Lower lobe of right lung (tissue), 2 donors: ENCODE measurements at regions of chr18 and their contacts with region 1.

Region 1: DNA sequence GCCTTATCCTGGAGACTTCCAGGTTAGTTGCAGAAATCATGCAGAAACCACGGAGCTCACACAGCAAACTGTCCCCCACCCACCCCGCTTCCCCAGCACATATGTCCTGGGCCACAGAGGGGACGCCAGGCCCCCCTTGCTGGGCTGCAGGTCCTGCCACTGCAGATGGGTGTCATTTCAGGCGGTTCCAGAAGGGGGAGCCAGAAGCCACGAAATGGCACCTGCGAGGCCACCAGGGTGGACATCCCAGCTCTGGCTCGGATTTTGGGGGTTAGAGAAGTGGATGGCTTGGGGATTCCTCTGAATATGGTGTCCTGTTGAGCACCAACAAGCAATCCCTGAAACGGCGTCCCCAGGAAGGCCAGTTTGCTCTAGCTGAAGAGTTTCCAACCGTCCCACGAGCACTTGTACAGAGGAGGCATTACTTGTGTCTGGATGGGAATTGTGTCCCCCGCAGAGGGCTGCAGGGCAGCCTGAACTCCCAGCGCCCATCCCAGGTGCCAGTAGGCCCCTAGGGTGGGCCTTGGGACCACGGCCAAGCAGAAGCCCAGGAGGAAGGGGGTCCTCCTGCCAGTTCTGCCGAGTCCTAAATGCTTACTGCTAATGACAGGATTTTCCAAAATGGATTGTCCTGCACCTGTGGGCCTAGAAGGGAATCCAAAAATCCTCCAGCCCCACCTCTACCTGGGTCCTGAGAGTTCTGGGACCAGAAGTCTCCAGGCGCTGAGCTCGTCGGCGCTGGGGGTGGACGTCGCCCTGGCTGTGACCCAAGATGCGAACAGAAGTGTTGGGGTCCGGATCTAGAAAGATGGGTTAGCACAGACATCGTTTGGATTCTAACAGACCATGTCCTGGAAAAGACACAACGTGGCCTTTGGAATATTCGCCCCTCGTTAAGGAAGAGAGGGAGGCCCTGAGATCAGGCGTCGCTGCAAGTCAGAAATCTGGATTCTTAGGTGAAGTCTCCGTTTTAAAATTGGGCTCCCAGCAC is 14.6 kb upstream of the NFATC1 start:
- DNase-seq: peak; percentile 65
- ATAC-seq: peak; percentile 50 to 56
- H3K4me3 ChIP-seq: no peak overlapping the region
- H3K27ac ChIP-seq: no peak overlapping the region
- H3K4me1 ChIP-seq: peaks cover 7% of the 10 kb centered on the region
- H3K27me3 ChIP-seq: no peaks in the 10 kb centered on the region
- CTCF ChIP-seq: peak; percentile 85

Region 2: GRCh38 chr18:79528846-79529245 is 147.7 kb after region 1 on chr18:
- intact Hi-C with region 1: loop called (anchors 10 kb)
- DNase-seq: peak; percentile 47
- ATAC-seq: peak; percentile 20 to 54
- H3K4me3 ChIP-seq: no peak overlapping the region
- H3K27ac ChIP-seq: no peak overlapping the region
- H3K4me1 ChIP-seq: peaks cover 13% of the 10 kb centered on the region
- H3K27me3 ChIP-seq: peaks cover 8% of the 10 kb centered on the region
- CTCF ChIP-seq: peak; percentile 90

Region 3: DNA sequence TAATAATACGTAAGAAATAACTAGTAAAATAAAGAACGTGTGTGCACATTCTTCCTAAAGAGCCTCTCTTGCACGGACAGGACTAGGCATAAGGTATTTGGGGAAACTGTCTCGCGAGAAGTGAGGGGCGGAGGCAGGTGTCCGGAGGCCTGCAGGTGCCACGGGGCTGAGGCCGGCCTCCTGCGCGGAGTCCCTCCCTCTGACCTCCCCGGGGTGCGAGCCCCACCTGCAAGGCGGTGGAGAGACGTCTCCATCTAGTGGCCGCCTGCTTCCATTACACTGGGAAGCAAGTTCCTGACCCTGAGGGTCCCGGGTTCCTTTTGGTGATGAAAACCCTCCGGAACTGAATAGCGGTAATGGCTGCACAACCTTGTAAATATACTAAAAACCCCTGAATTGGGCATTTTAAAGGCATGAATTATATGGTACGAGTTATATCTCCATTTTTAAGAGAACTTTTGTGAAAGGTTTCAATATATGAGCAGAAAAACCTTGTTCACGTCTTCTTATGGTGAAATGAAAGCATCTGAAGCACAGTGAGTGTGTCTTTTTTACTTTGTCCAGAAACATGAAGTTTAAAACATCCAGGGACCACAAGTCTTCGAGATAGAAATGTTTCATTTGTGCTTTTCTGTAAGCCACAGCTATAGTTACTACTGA is 263.0 kb after region 1 on chr18:
- intact Hi-C with region 1: loop called (anchors 10 kb)
- DNase-seq: peak; percentile 73
- ATAC-seq: peak; percentile 89 to 92
- H3K4me3 ChIP-seq: no peak overlapping the region
- H3K27ac ChIP-seq: no peak overlapping the region
- H3K4me1 ChIP-seq: peaks cover 21% of the 10 kb centered on the region
- H3K27me3 ChIP-seq: peaks cover 4% of the 10 kb centered on the region
- CTCF ChIP-seq: peak; percentile 98

Region 4: DNA sequence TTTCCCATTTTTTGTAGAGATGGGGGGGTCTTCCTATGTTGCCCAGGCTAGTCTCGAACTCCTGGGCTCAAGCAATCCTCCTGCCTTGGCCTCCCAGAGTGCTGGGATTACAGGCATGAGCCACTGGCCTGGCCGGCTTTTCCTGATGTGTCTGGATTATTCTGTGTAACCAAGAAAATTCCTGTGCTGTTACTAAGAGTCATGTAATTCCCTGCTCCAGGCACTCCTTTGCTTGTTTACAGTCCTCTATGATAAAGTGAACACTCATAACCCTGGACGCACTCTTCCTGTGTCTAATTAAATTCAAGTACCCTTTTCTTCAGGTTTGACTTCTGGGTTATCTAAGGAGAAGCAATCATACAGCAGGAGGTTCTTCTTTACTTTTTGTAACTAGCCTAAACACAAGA is 283.6 kb after region 1 on chr18:
- intact Hi-C with region 1: no loop called
- DNase-seq: no peak
- ATAC-seq: peak; percentile 96 to 98
- H3K4me3 ChIP-seq: no peak overlapping the region
- H3K27ac ChIP-seq: peak overlapping the region; percentile 7
- H3K4me1 ChIP-seq: no peaks in the 10 kb centered on the region
- H3K27me3 ChIP-seq: peaks cover 4% of the 10 kb centered on the region
- CTCF ChIP-seq: no peak